Activated naive CD4-positive, alpha-beta T cell treated with anti-CD3 and anti-CD28 coated beads for 36 hours (primary cell): ENCODE measurements at regions of chr5 and their contacts with region 1.

Region 1: GRCh38 chr5:68983959-68984358 is 109.9 kb upstream of the SLC30A5 start:
- DNase-seq: no peak
- H3K4me3 Mint-ChIP-seq: no peak overlapping the region
- H3K27ac Mint-ChIP-seq: no peak overlapping the region
- H3K4me1 Mint-ChIP-seq: no peaks in the 10 kb centered on the region
- H3K27me3 Mint-ChIP-seq: no peaks in the 10 kb centered on the region

Region 2: GRCh38 chr5:68673106-68673822 is 310.7 kb before region 1 on chr5:
- CTCF ChIA-PET with region 1: no interaction called
- intact Hi-C with region 1: no loop called
- DNase-seq: no peak
- H3K4me3 Mint-ChIP-seq: no peak overlapping the region
- H3K27ac Mint-ChIP-seq: no peak overlapping the region
- H3K4me1 Mint-ChIP-seq: peaks cover 3% of the 10 kb centered on the region
- H3K27me3 Mint-ChIP-seq: no peaks in the 10 kb centered on the region

Region 3: DNA sequence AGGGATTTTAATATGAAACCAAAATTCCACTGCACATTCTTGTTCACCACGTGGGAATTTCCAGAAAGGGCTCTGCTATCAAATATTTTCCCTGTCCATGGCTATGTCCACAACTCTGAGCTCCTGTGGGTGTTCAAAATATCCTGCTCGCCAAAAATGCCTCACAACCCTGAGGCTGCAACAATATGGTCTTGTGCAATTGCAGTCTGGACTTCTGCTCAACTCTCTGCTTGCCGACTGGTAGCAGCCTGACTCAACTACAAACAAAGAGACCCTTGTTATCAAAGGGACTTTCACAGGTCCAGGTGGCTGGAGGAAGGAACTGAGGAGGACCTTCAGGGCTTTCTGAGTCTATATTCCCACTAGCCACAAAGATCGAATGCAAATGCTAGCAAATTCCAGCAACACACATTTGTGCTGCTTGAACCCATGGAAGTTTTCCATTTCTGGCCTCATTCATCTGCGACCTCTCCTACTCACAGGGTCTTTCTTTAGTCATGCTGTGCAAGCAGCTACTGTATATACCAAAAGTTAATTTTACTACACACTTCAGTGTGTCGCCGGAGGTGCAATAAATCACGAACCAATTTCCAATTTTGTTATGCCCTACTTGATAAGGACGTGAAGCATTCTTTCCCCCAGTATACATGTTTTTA is 59.3 kb before region 1 on chr5:
- CTCF ChIA-PET with region 1: no interaction called
- intact Hi-C with region 1: loop called (anchors 10 kb)
- DNase-seq: no peak
- H3K4me3 Mint-ChIP-seq: no peak overlapping the region
- H3K27ac Mint-ChIP-seq: no peak overlapping the region
- H3K4me1 Mint-ChIP-seq: no peaks in the 10 kb centered on the region
- H3K27me3 Mint-ChIP-seq: no peaks in the 10 kb centered on the region